Endothelial cell of umbilical vein (primary cell): ENCODE measurements at regions of chr16 and their contacts with region 1.

Region 1: DNA sequence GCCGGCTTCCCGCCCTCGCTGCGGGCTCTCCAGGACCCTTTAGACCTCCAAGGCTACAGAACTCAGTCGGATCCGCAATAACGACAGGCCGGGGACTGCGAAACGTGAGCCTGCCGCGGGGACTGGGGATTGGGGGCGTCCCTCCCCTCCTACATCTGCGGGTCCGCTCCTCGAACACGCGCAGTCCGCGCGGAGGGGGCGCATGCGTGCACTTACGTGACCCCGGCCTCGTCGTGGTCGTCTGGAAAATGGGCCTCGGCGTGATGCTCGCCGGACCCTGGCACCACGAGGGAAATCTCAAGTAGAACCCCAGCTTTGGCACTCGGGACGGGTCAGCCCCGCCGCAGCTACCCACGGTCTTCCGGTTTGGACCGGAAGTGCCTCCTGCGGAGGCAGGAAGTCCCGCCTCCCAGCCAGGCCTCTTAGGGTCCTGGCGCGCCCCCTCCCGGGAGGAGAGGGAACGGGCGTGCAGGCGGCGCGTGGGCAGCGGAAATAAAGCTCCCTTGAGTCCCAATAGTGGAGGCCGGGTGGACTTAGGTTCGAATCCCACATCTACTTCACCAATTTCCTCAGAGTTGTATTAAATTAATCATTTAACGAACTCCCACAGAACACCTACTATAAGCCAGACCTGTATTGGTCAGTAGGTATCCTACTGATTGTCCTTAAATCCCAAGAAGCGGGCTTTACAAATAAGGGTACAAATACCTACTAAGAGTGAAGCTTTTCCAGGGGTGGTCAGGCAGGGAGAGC is at the start of gene TAF1C:
- DNase-seq: peak; percentile 94
- H3K4me3 ChIP-seq: peak within 1 kb of the TSS; percentile 76 to 95 (median 86)
- H3K27ac ChIP-seq: peak within 1 kb of the TSS; percentile 35
- H3K4me1 ChIP-seq: peaks cover 17% of the 10 kb centered on the region
- H3K27me3 ChIP-seq: no peaks in the 10 kb centered on the region
- CTCF ChIP-seq: peak; percentile 98 to 99
- POLR2A ChIP-seq: peak; percentile 61
- total RNA-seq, gene TAF1C: 57.2 and 62.3 TPM in 2 replicates

Region 2: GRCh38 chr16:83779886-83780285 is 407.0 kb before region 1 on chr16:
- CTCF ChIA-PET with region 1: no interaction called
- POLR2A ChIA-PET with region 1: no interaction called
- dilution Hi-C with region 1: no loop called
- intact Hi-C with region 1: no loop called
- DNase-seq: peak; percentile 84
- H3K4me3 ChIP-seq: no peak overlapping the region
- H3K27ac ChIP-seq: no peak overlapping the region
- H3K4me1 ChIP-seq: peaks cover 14% of the 10 kb centered on the region
- H3K27me3 ChIP-seq: no peaks in the 10 kb centered on the region
- CTCF ChIP-seq: no peak
- POLR2A ChIP-seq: no peak

Region 3: DNA sequence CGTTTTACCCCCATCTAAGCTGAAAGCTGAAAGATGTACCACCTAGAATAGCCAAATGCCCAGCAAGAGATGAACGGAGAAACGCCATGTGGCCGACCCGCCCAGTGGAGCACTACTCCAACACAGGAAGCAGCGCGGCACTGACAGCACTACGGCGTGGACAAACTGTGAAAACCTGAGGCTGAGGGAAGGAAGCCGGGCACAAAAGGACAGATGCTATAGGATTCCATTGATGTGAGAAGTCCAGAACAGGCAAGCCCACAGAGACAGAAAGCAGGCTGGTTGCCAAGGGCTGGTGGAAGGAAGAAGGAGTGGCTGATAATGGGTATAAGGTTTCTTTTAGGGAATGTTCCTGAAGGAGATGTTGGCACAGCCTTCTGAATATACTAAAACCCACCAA is 114.8 kb before region 1 on chr16:
- CTCF ChIA-PET with region 1: interaction called, 7 read pairs
- POLR2A ChIA-PET with region 1: no interaction called
- dilution Hi-C with region 1: no loop called
- intact Hi-C with region 1: loop called (anchors 5 kb)
- DNase-seq: peak; percentile 74
- H3K4me3 ChIP-seq: no peak overlapping the region
- H3K27ac ChIP-seq: peak overlapping the region; percentile 6
- H3K4me1 ChIP-seq: peaks cover 20% of the 10 kb centered on the region
- H3K27me3 ChIP-seq: no peaks in the 10 kb centered on the region
- CTCF ChIP-seq: no peak
- POLR2A ChIP-seq: peak; percentile 71

Region 4: GRCh38 chr16:84116720-84117493 is 70.0 kb before region 1 on chr16 and contains the start of gene MBTPS1:
- CTCF ChIA-PET with region 1: interaction called, 29 read pairs
- POLR2A ChIA-PET with region 1: interaction called, 5 read pairs
- dilution Hi-C with region 1: no loop called
- intact Hi-C with region 1: loop called (anchors 1 kb)
- DNase-seq: peak; percentile 98
- H3K4me3 ChIP-seq: peak within 1 kb of the TSS; percentile 70 to 96 (median 88)
- H3K27ac ChIP-seq: peak within 1 kb of the TSS; percentile 69
- H3K4me1 ChIP-seq: peaks cover 10% of the 10 kb centered on the region
- H3K27me3 ChIP-seq: no peaks in the 10 kb centered on the region
- CTCF ChIP-seq: no peak
- POLR2A ChIP-seq: peak; percentile 69
- total RNA-seq, gene MBTPS1: 93.0 and 99.6 TPM in 2 replicates

Region 5: GRCh38 chr16:84150926-84151325 is 35.9 kb before region 1 on chr16:
- CTCF ChIA-PET with region 1: interaction called, 12 read pairs
- POLR2A ChIA-PET with region 1: no interaction called
- dilution Hi-C with region 1: no loop called
- intact Hi-C with region 1: no loop called
- DNase-seq: no peak
- H3K4me3 ChIP-seq: no peak overlapping the region
- H3K27ac ChIP-seq: no peak overlapping the region
- H3K4me1 ChIP-seq: no peaks in the 10 kb centered on the region
- H3K27me3 ChIP-seq: peaks cover 4 to 8% of the 10 kb centered on the region in 2 experiments
- CTCF ChIP-seq: no peak
- POLR2A ChIP-seq: no peak

Region 6: GRCh38 chr16:84175350-84176081 is 11.3 kb before region 1 on chr16:
- CTCF ChIA-PET with region 1: interaction called, 24 read pairs
- POLR2A ChIA-PET with region 1: interaction called, 3 read pairs
- dilution Hi-C with region 1: no loop called
- intact Hi-C with region 1: loop called (anchors 1 kb)
- DNase-seq: peak; percentile 52
- H3K4me3 ChIP-seq: no peak overlapping the region
- H3K27ac ChIP-seq: no peak overlapping the region
- H3K4me1 ChIP-seq: peaks cover 18% of the 10 kb centered on the region
- H3K27me3 ChIP-seq: no peaks in the 10 kb centered on the region
- CTCF ChIP-seq: peak; percentile 32 to 61
- POLR2A ChIP-seq: no peak

Region 7: DNA sequence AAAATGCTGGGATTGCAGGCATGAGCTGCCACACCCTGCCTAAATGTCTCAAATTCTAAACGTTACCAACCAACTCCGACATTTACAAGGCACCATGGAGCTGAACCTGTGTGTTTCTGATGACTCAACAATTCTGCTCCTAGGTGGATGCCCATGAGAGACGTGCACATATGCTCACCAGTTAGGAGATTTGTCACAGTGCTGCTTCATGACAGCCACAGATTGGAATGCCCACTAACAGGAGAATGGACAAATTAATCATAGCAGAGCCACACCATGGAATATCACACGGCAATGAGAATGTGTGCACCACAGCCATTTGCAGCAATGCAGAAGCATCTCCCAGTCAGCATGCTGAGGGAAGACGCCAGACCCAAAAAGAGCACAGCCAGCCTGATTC is 61.0 kb after region 1 on chr16:
- CTCF ChIA-PET with region 1: no interaction called
- POLR2A ChIA-PET with region 1: no interaction called
- dilution Hi-C with region 1: no loop called
- intact Hi-C with region 1: no loop called
- DNase-seq: no peak
- H3K4me3 ChIP-seq: no peak overlapping the region
- H3K27ac ChIP-seq: no peak overlapping the region
- H3K4me1 ChIP-seq: no peaks in the 10 kb centered on the region
- H3K27me3 ChIP-seq: peaks cover 0 to 2% of the 10 kb centered on the region in 2 experiments
- CTCF ChIP-seq: no peak
- POLR2A ChIP-seq: no peak

Region 8: GRCh38 chr16:84266451-84266850 is 79.6 kb after region 1 on chr16:
- CTCF ChIA-PET with region 1: no interaction called
- POLR2A ChIA-PET with region 1: no interaction called
- dilution Hi-C with region 1: no loop called
- intact Hi-C with region 1: no loop called
- DNase-seq: peak; percentile 71
- H3K4me3 ChIP-seq: no peak overlapping the region
- H3K27ac ChIP-seq: no peak overlapping the region
- H3K4me1 ChIP-seq: no peaks in the 10 kb centered on the region
- H3K27me3 ChIP-seq: no peaks in the 10 kb centered on the region
- CTCF ChIP-seq: no peak
- POLR2A ChIP-seq: no peak

Region 9: DNA sequence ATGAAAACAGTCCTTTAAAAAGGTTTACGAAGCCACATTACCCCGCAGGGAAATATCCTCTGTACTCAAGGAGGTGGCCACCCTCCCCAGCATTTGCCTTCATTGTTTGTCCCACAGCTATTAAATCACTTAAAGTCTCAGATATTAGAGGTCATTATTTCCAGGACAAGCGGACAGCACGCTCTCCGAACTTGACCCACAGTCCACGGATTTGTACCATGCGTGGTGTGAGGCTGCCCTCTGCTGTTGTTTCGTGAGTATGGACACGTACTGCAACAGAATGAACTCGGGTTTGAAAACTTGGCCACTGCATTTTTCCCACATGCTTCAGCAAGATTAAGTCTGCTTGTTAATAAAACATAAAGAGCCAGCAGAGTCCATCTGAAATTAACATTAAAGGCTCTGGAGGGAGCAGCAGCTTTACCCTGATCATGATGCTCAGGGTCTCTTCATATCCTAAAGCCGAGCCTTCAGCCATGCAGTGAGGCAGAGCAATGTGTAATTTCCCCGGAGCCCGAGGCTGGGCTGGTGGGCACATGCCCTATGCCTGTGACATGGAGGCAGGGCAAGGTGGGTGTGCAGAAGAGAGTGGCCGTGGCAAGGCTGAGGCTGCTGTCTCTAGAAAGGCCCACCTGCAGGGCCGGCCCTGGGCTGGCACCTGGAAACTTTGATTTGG is 297.9 kb after region 1 on chr16:
- CTCF ChIA-PET with region 1: interaction called, 5 read pairs
- POLR2A ChIA-PET with region 1: no interaction called
- dilution Hi-C with region 1: no loop called
- intact Hi-C with region 1: loop called (anchors 1 kb)
- DNase-seq: peak; percentile 61
- H3K4me3 ChIP-seq: no peak overlapping the region
- H3K27ac ChIP-seq: no peak overlapping the region
- H3K4me1 ChIP-seq: no peaks in the 10 kb centered on the region
- H3K27me3 ChIP-seq: no peaks in the 10 kb centered on the region
- CTCF ChIP-seq: peak; percentile 58 to 69
- POLR2A ChIP-seq: no peak